Right ventricle myocardium superior (tissue), 1 donor: ENCODE measurements at regions of chr5 and their contacts with region 1.

Region 1: GRCh38 chr5:41510176-41510831 is at the start of gene PLCXD3:
- DNase-seq: peak; percentile 76
- ATAC-seq: peak; percentile 91
- total RNA-seq, gene PLCXD3: 79.3 TPM

Region 2: GRCh38 chr5:41371741-41372140 is 138.6 kb before region 1 on chr5:
- intact Hi-C with region 1: loop called (anchors 10 kb)
- DNase-seq: no peak
- ATAC-seq: no peak

Region 3: GRCh38 chr5:41433552-41434181 is 76.6 kb before region 1 on chr5:
- intact Hi-C with region 1: no loop called
- DNase-seq: no peak
- ATAC-seq: no peak

Region 4: GRCh38 chr5:41457094-41457493 is 53.2 kb before region 1 on chr5:
- intact Hi-C with region 1: loop called (anchors 10 kb)
- DNase-seq: peak; percentile 57
- ATAC-seq: peak; percentile 90

Region 5: GRCh38 chr5:41835645-41836044 is 325.3 kb after region 1 on chr5:
- intact Hi-C with region 1: no loop called
- DNase-seq: peak; percentile 62
- ATAC-seq: peak; percentile 97